Naive thymus-derived CD4-positive, alpha-beta T cell (primary cell): ENCODE measurements at regions of chr3 and their contacts with region 1.

Region 1: DNA sequence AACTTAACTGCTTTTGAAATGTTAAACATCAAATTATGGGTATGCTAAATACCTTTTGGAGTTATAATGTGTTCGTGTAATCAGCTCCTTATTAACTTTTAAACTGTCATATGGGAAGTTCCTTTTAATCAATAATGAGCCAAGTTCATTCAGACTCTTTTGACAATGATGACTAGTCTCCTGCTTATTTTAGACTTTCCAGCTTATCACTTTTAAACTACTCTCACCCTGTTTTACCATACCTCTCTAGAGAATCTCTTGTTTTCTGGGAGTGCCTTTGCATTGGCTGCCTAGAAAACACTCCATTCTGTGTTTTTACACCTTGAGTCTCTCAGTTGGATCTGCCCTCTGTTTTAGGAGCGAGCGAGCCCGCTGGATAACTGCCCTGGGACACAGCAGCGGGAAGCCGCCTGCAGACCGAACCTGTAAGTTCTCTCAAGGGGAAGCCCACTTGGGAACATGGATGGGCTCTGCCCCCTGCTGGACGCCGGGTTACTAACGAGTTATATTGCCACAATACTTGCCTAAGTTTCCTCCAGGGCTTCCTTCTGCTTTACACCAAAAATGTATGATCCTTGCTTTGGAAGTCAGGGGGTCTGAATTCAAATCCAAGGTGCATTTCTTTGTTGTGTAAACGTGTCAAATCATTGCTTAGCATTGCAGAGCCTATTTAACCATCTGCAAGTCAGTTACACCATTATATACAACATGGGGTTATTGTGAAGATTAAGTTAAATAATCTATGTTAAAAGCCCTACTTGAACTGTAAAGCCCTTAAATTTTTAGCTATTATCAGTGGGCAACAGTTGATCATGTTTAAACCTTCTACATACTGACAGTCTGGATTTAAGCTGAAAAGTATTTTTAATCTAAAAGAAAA is 71.3 kb downstream of the DHX36 start:
- DNase-seq: peak; percentile 16 to 67 (median 49)
- ATAC-seq: peak; percentile 84
- H3K4me3 ChIP-seq: no peak overlapping the region
- H3K4me3 Mint-ChIP-seq: no peak overlapping the region
- H3K27ac ChIP-seq: no peak overlapping the region
- H3K27ac Mint-ChIP-seq: peak overlapping the region in 1 of 9 donors; percentile 48
- H3K4me1 ChIP-seq: no peaks in the 10 kb centered on the region
- H3K4me1 Mint-ChIP-seq: peaks cover 0 to 5% (median 0%) of the 10 kb centered on the region in 7 donors
- H3K27me3 ChIP-seq: no peaks in the 10 kb centered on the region
- H3K27me3 Mint-ChIP-seq: no peaks in the 10 kb centered on the region

Region 2: GRCh38 chr3:154040286-154040685 is 212.7 kb before region 1 on chr3:
- CTCF ChIA-PET with region 1: interaction called, 6 read pairs
- POLR2A ChIA-PET with region 1: no interaction called
- intact Hi-C with region 1: loop called in 1 of 2 experiments (anchors 5 kb)
- DNase-seq: no peak
- ATAC-seq: no peak
- H3K4me3 ChIP-seq: no peak overlapping the region
- H3K4me3 Mint-ChIP-seq: no peak overlapping the region
- H3K27ac ChIP-seq: no peak overlapping the region
- H3K27ac Mint-ChIP-seq: no peak overlapping the region
- H3K4me1 ChIP-seq: no peaks in the 10 kb centered on the region
- H3K4me1 Mint-ChIP-seq: no peaks in the 10 kb centered on the region
- H3K27me3 ChIP-seq: peaks cover 0 to 4% of the 10 kb centered on the region in 2 donors
- H3K27me3 Mint-ChIP-seq: peaks cover 2 to 22% (median 9%) of the 10 kb centered on the region in 5 donors

Region 3: GRCh38 chr3:154095832-154096421 is 157.1 kb before region 1 on chr3:
- CTCF ChIA-PET with region 1: no interaction called
- POLR2A ChIA-PET with region 1: no interaction called
- intact Hi-C with region 1: loop called (anchors 1 to 2 kb)
- DNase-seq: no peak
- ATAC-seq: no peak
- H3K4me3 ChIP-seq: no peak overlapping the region
- H3K4me3 Mint-ChIP-seq: no peak overlapping the region
- H3K27ac ChIP-seq: no peak overlapping the region
- H3K27ac Mint-ChIP-seq: no peak overlapping the region
- H3K4me1 ChIP-seq: no peaks in the 10 kb centered on the region
- H3K4me1 Mint-ChIP-seq: no peaks in the 10 kb centered on the region
- H3K27me3 ChIP-seq: no peaks in the 10 kb centered on the region
- H3K27me3 Mint-ChIP-seq: peaks cover 0 to 12% (median 1%) of the 10 kb centered on the region in 5 donors

Region 4: DNA sequence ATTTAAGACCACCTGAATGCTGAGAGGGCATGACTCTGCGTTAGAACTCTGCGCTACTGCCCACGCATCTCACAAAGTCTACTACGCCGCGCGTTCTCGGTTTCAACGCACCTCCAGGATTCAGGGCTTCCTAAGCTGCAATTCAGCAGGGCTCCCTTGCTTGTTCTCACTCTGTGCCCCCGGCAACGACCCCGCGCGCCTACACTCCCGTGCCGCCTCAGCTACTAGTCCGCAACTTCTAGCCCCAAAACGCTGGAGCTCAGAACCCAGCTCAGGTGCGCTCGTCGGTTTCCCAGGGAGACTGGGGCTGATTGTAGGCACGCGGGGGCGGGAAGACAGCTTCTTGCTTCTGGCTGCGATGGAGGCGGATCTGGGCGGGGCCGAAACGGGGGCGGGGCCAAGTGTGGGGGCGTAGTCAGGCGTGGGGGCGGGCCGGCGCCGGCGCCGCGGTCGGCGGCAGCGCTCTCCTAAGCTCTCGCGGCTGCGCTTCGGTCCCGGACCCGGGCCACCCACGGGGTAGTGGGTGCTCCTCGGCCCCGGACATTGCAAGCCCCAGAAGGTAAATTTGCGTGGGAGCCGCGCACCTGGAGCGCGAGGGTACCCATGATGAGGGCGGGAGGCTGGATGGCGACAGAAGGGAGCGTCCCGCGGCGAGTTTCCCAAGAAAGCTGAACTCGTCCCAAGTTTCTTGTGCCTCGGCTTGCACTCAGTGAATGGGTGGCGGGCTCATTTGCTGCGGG is 131.9 kb before region 1 on chr3 and contains the start of gene ARHGEF26:
- CTCF ChIA-PET with region 1: no interaction called
- POLR2A ChIA-PET with region 1: no interaction called
- intact Hi-C with region 1: loop called in 1 of 2 experiments (anchors 10 kb)
- DNase-seq: peak; percentile 7 to 73 (median 59)
- ATAC-seq: peak; percentile 89
- H3K4me3 ChIP-seq: peak within 1 kb of the TSS; percentile 57
- H3K4me3 Mint-ChIP-seq: peak within 1 kb of the TSS; percentile 68 to 91 (median 82)
- H3K27ac ChIP-seq: no peak within 1 kb of the TSS
- H3K27ac Mint-ChIP-seq: peak within 1 kb of the TSS in 1 of 9 donors; percentile 28
- H3K4me1 ChIP-seq: no peaks in the 10 kb centered on the region
- H3K4me1 Mint-ChIP-seq: peaks cover 11 to 24% (median 18%) of the 10 kb centered on the region in 7 donors
- H3K27me3 ChIP-seq: peaks cover 0 to 6% of the 10 kb centered on the region in 2 donors
- H3K27me3 Mint-ChIP-seq: peaks cover 60 to 82% (median 69%) of the 10 kb centered on the region in 5 donors
- total RNA-seq, gene ARHGEF26: 0.08 to 0.13 TPM in 2 of 5 experiments, not detected in the others

Region 5: GRCh38 chr3:154275965-154276364 is 23.0 kb after region 1 on chr3:
- CTCF ChIA-PET with region 1: no interaction called
- POLR2A ChIA-PET with region 1: no interaction called
- intact Hi-C with region 1: no loop called
- DNase-seq: no peak
- ATAC-seq: no peak
- H3K4me3 ChIP-seq: no peak overlapping the region
- H3K4me3 Mint-ChIP-seq: no peak overlapping the region
- H3K27ac ChIP-seq: no peak overlapping the region
- H3K27ac Mint-ChIP-seq: no peak overlapping the region
- H3K4me1 ChIP-seq: no peaks in the 10 kb centered on the region
- H3K4me1 Mint-ChIP-seq: peaks cover 0 to 6% (median 4%) of the 10 kb centered on the region in 7 donors
- H3K27me3 ChIP-seq: no peaks in the 10 kb centered on the region
- H3K27me3 Mint-ChIP-seq: no peaks in the 10 kb centered on the region